ENCODE measurements at regions of chr11 and their contacts with region 1.

Region 1: DNA sequence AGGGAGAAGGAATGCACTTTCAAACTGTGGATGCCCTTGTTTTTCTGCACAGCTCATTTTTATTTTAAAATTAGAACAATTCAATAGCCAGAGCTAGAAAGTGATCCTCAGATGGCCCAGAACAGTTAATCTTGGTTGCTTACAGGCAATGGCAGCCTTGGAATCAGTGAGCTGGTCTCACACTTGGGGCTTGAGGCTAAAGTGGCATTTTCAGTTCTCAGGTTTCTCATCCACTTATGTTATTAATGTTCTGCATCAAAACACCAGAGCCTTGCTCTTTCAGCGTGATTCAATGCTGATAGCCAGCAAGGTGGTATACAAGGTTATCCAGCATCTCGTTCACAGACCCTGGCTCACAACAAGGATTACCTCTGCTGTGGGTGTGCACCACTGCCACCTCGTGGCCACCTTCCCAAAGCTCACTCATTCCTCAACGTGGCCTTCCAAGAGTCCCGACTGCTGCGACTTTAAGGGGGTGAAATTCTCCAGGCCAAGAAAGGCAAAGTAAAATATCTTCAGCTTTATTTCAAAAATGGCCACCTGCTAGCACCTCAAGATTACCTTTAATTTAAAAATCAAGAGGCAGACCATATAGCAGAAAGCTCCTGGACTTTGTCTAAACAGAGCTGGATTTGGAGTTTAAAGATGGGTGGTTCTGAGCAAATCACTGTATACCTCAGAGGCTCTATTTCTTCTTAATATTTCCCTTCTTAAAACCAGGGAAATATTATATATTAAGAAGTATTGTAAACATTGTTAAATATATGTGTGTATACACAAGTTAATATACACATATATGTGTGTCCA is 34.2 kb upstream of the FSHB start:
- DNase-seq: peak; percentile 28
- H3K4me3 ChIP-seq: no peak overlapping the region
- H3K27ac ChIP-seq: no peak overlapping the region
- H3K4me1 ChIP-seq: peaks cover 17% of the 10 kb centered on the region
- H3K27me3 ChIP-seq: no peaks in the 10 kb centered on the region
- CTCF ChIP-seq: peak; percentile 80 to 87

Region 2: DNA sequence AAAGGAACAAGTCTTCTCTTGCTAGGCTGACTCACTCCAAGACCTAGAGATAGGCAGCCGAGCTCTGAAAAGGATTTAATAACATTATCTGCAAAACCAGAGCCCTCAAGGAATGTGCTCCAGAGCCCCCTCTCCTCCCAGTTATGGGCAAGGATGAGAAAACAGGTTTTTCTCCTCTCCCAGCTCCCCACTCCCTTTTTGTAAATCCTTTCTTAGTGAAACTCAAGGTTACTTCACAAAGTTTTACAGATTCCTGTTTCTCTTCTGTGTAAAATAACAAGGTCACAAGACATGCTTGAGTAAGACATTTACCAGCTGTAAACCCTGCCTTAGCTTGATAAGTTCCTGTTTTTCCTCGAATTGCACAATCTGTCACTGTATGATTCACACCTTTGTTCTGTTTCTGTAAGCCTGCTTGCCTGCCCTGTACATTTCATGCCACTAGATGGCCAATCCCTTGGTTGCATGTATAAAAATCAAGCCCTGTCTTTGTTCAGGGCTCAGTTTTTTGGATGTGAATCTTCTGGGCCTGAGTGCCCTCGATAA is 669.1 kb before region 1 on chr11:
- CTCF ChIA-PET with region 1: no interaction called
- dilution Hi-C with region 1: no loop called
- in situ Hi-C with region 1: no loop called
- intact Hi-C with region 1: loop called (anchors 1 kb)
- DNase-seq: peak; percentile 82
- H3K4me3 ChIP-seq: no peak overlapping the region
- H3K27ac ChIP-seq: peak overlapping the region; percentile 49
- H3K4me1 ChIP-seq: no peaks in the 10 kb centered on the region
- H3K27me3 ChIP-seq: no peaks in the 10 kb centered on the region
- CTCF ChIP-seq: peak; percentile 77 to 79

Region 3: DNA sequence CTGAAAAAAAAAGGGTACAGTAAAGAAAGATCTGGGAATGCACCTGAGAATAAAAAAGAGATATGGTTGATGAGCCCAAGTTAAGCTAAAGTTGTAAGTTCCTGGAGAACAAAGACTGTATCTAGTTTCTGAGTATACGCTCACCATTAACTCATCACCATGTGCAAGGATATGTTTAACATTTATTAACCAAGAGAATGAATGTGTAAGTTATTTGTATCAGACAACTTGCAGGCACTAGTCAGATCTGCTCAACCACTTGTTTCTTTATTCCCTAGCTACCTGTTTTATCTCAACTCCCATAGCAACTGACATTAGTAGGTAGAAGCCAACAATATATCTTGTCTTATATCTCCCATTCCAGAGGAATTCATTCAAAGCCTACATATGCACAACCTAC is 104.9 kb before region 1 on chr11:
- CTCF ChIA-PET with region 1: no interaction called
- dilution Hi-C with region 1: no loop called
- in situ Hi-C with region 1: no loop called
- intact Hi-C with region 1: no loop called
- DNase-seq: no peak
- H3K4me3 ChIP-seq: no peak overlapping the region
- H3K27ac ChIP-seq: no peak overlapping the region
- H3K4me1 ChIP-seq: no peaks in the 10 kb centered on the region
- H3K27me3 ChIP-seq: no peaks in the 10 kb centered on the region
- CTCF ChIP-seq: no peak

Region 4: DNA sequence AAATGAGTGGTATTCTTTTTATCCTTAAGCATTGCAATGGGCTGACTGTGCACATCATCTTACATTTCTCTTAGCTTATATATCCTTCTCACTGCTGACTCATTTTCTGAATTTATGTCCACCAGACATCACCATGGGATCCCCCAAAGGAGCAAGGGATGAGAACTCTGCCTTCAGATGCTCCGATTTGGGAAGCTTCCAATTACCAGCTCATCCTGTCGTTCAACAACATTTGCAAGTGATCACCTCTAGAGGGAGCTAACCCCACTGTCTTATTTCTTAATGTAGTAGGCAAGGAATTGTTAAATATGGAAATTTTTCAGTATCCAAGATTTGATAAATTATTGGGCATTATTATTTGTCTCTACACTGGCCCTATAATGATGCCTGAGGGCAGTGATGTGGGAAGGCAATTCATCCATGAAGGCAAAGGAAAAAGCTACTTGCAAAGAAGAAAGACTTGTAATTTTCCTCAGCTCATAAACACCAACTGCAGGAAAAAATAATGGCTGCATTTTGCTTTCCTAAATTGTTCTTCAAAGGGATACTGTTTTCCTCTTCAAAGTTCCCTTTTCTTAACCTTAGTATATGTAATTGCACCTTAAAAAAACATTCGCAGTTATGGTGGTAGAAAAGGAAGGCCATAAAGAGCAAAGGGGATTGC is 68.2 kb before region 1 on chr11:
- CTCF ChIA-PET with region 1: interaction called, 9 read pairs
- dilution Hi-C with region 1: no loop called
- in situ Hi-C with region 1: no loop called
- intact Hi-C with region 1: loop called (anchors 2 kb)
- DNase-seq: peak; percentile 32
- H3K4me3 ChIP-seq: no peak overlapping the region
- H3K27ac ChIP-seq: no peak overlapping the region
- H3K4me1 ChIP-seq: no peaks in the 10 kb centered on the region
- H3K27me3 ChIP-seq: no peaks in the 10 kb centered on the region
- CTCF ChIP-seq: peak; percentile 74 to 91

Region 5: DNA sequence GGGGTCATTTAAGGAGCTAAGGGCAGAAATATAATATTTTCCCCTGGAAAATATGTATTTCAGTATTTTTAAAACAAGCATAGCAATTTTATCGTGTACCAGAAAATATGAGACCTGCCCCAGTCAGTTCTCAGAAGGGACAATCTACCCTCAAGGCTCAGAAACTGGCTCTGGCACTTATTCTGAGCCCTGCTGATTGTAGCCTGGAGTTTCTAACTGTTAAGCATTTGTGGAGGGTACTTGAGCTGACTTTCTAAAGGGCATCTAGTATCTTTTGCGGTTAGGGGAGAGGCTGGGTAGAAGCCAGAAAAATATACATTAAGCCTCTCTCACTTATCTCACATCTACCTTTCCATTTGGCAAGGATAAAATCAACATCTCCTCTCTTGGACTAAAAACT is 37.1 kb before region 1 on chr11:
- CTCF ChIA-PET with region 1: no interaction called
- dilution Hi-C with region 1: no loop called
- in situ Hi-C with region 1: no loop called
- intact Hi-C with region 1: no loop called
- DNase-seq: no peak
- H3K4me3 ChIP-seq: no peak overlapping the region
- H3K27ac ChIP-seq: no peak overlapping the region
- H3K4me1 ChIP-seq: no peaks in the 10 kb centered on the region
- H3K27me3 ChIP-seq: no peaks in the 10 kb centered on the region
- CTCF ChIP-seq: no peak

Region 6: DNA sequence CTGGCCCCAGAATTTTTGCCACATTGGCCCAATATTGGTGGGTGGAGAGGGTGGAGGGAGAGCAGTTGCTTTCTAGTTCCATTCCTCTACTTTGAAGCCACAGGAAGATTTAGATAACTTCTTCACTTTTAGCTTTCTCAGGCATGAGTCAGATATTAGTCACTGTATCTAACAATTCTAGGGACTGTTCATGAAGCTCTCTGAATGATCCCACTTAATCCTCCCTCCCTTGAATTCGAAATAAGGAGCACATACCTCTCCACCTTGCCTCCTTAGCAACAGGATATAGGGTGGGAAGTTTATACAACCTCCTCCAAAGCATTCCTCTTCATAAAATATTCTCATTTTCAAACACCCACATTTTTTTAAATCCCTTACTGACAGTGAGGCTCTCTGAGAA is 47.7 kb after region 1 on chr11:
- CTCF ChIA-PET with region 1: no interaction called
- dilution Hi-C with region 1: no loop called
- in situ Hi-C with region 1: no loop called
- intact Hi-C with region 1: loop called (anchors 5 kb)
- DNase-seq: peak; percentile 72
- H3K4me3 ChIP-seq: no peak overlapping the region
- H3K27ac ChIP-seq: no peak overlapping the region
- H3K4me1 ChIP-seq: peaks cover 11% of the 10 kb centered on the region
- H3K27me3 ChIP-seq: no peaks in the 10 kb centered on the region
- CTCF ChIP-seq: no peak

Region 7: DNA sequence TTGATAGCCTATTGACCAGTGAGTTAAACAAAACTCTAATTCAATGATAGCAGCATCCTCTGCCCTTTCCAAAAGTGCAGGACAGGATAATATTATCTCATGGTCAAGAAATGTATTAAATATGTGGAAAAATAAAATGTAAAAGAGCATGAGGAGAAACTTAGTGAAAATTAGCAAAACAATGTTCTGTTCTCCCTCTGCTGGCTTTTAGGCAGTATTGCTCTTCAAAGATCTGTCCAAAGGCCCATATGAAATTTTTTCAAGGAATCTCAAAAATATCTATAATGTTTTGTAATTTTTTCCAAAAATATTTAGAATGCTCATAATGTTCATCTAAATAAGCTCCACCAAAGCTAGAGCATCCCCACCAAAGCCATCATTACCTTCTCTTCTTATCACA is 118.0 kb after region 1 on chr11:
- CTCF ChIA-PET with region 1: interaction called, 10 read pairs
- dilution Hi-C with region 1: no loop called
- in situ Hi-C with region 1: no loop called
- intact Hi-C with region 1: loop called (anchors 5 kb)
- DNase-seq: no peak
- H3K4me3 ChIP-seq: no peak overlapping the region
- H3K27ac ChIP-seq: no peak overlapping the region
- H3K4me1 ChIP-seq: peaks cover 6% of the 10 kb centered on the region
- H3K27me3 ChIP-seq: no peaks in the 10 kb centered on the region
- CTCF ChIP-seq: peak; percentile 61 to 62

Region 8: DNA sequence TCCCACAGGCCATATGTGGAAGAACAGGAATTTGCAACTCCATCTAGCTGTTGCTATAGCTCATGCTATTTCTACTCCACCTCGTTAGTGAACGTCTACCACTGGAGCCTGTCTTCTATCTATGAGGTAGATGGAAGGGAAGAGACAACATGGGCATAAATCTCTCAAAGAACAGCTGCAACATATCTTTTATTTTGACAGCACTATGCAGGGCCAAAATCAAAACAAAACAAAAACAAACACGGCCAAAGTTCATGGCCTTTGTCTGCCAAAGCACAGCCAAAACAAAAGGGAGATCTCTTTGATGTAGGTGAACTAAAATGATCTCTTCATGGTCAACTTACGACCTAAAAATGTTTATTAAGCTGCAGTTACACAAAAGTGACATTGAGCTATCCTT is 604.8 kb after region 1 on chr11:
- CTCF ChIA-PET with region 1: no interaction called
- dilution Hi-C with region 1: no loop called
- in situ Hi-C with region 1: no loop called
- intact Hi-C with region 1: loop called (anchors 5 kb)
- DNase-seq: no peak
- H3K4me3 ChIP-seq: no peak overlapping the region
- H3K27ac ChIP-seq: no peak overlapping the region
- H3K4me1 ChIP-seq: no peaks in the 10 kb centered on the region
- H3K27me3 ChIP-seq: no peaks in the 10 kb centered on the region
- CTCF ChIP-seq: no peak

Measured in mammary epithelial cell (primary cell).